SK-N-SH (cell line): ENCODE measurements at regions of chr11 and their contacts with region 1.

Region 1: GRCh38 chr11:61532139-61533038 is 23.8 kb downstream of the LRRC10B start:
- DNase-seq: peak; percentile 69
- H3K4me3 ChIP-seq: no peak overlapping the region; a peak in 1 of 4 replicates
- H3K27ac ChIP-seq: peak overlapping the region in 1 of 2 experiments; percentile 91; a peak in 2 of 4 replicates
- H3K4me1 ChIP-seq: peaks cover 0 to 100% of the 10 kb centered on the region in 2 experiments; a peak in 2 of 4 replicates
- H3K27me3 ChIP-seq: no peaks in the 10 kb centered on the region
- CTCF ChIP-seq: peak; percentile 76
- EP300 ChIP-seq: no peak
- RAD21 ChIP-seq: peak; percentile 42

Region 2: DNA sequence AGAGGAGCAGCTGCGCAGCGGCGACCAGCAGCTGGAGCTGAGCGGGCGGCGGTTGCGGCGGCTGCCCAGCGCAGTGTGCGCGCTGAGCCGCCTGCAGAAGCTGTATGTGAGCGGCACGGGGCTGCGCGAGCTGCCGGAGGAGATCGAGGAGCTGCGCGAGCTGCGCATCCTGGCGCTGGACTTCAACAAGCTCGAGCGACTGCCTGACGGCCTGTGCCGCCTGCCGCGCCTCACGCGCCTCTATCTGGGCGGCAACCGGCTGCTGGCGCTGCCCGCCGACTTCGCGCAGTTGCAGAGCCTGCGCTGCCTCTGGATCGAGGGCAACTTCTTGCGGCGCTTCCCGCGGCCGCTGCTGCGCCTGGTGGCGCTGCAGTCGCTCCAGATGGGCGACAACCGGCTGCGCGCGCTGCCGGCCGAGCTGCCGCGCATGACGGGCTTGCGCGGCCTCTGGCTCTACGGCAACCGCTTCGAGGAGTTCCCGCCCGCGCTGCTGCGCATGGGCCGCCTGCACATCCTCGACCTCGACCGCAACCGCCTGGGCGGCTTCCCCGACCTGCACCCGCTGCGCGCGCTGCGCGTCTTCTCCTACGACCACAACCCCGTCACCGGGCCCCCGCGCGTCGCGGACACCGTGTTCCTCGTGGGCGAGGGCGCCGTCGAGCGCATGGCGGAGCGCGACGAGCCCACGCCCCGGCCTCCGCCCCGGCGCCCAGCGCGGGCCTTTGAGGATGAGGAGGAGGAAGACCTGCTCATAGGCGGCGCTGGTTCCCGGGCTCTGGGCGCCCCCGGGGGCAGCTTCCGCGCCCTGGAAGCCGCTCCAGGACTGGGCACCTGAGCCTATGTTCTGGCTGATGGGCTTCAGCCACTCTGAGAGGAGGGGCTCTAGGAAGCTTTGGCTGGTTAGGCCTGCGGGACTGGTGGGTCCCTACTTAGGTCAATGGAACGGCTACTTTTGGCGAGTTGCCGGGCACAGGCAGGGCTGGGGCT is 23.1 kb before region 1 on chr11:
- CTCF ChIA-PET with region 1: interaction called, 334 read pairs
- POLR2A ChIA-PET with region 1: interaction called, 8 read pairs
- DNase-seq: peak; percentile 92
- H3K4me3 ChIP-seq: peak overlapping the region in 1 of 2 experiments; percentile 29; a peak in 2 of 4 replicates
- H3K27ac ChIP-seq: no peak overlapping the region; a peak in 1 of 4 replicates
- H3K4me1 ChIP-seq: peaks cover 0 to 49% of the 10 kb centered on the region in 2 experiments; a peak in 3 of 4 replicates
- H3K27me3 ChIP-seq: peaks cover 32% of the 10 kb centered on the region
- CTCF ChIP-seq: peak; percentile 36; the same call in 1 of the 2 replicates
- EP300 ChIP-seq: no peak
- RAD21 ChIP-seq: peak; percentile 54

Region 3: GRCh38 chr11:61555051-61555969 is 22.9 kb after region 1 on chr11:
- CTCF ChIA-PET with region 1: interaction called, 19 read pairs
- POLR2A ChIA-PET with region 1: interaction called, 5 read pairs
- DNase-seq: peak; percentile 90
- H3K4me3 ChIP-seq: peak overlapping the region in 1 of 2 experiments; percentile 1; a peak in 1 of 4 replicates
- H3K27ac ChIP-seq: peak overlapping the region in 1 of 2 experiments; percentile 67; a peak in 2 of 4 replicates
- H3K4me1 ChIP-seq: peaks cover 0 to 65% of the 10 kb centered on the region in 2 experiments; a peak in 1 of 4 replicates
- H3K27me3 ChIP-seq: peaks cover 37% of the 10 kb centered on the region
- CTCF ChIP-seq: peak; percentile 34
- EP300 ChIP-seq: no peak
- RAD21 ChIP-seq: no peak

Region 4: GRCh38 chr11:61560751-61561150 is 28.4 kb after region 1 on chr11:
- CTCF ChIA-PET with region 1: interaction called, 19 read pairs
- POLR2A ChIA-PET with region 1: no interaction called
- DNase-seq: no peak
- H3K4me3 ChIP-seq: no peak overlapping the region
- H3K27ac ChIP-seq: no peak overlapping the region
- H3K4me1 ChIP-seq: peaks cover 0 to 56% of the 10 kb centered on the region in 2 experiments; a peak in 1 of 4 replicates
- H3K27me3 ChIP-seq: peaks cover 13% of the 10 kb centered on the region
- CTCF ChIP-seq: no peak
- EP300 ChIP-seq: no peak
- RAD21 ChIP-seq: no peak

Region 5: GRCh38 chr11:61891331-61892084 is 359.1 kb after region 1 on chr11 and contains the start of gene FADS3:
- CTCF ChIA-PET with region 1: no interaction called
- POLR2A ChIA-PET with region 1: no interaction called
- DNase-seq: peak; percentile 96
- H3K4me3 ChIP-seq: peak within 1 kb of the TSS; percentile 77 to 81
- H3K27ac ChIP-seq: peak within 1 kb of the TSS; percentile 24 to 31; a peak in 2 of 4 replicates
- H3K4me1 ChIP-seq: peaks cover 7 to 14% of the 10 kb centered on the region in 2 experiments; a peak in 3 of 4 replicates
- H3K27me3 ChIP-seq: no peaks in the 10 kb centered on the region
- CTCF ChIP-seq: no peak
- EP300 ChIP-seq: no peak
- RAD21 ChIP-seq: no peak
- polyA plus RNA-seq, gene FADS3: 93.3 and 116 TPM in 2 replicates